GM18951 (cell line): ENCODE measurements at regions of chr5 and their contacts with region 1.

Region 1: DNA sequence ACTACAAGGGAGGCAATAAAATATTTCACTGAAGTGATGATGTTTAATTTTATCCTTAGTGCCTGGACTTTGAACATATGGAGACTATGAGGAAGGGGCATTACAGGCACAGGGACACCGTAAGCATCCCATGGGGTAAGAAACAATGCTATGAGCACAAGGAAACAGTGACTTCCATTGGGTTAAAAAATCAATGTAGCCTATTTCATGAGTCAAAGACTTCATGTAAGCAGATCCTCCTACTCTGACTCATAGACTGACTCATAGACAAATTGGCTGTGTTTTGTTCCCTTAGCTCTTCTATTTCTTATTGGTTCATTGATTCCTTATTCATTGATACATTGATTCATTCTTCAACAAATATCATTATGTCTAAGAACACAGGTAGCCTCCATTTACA is 351.0 kb downstream of the PRELID2 start:
- POLR2A ChIP-seq: no peak

Region 2: DNA sequence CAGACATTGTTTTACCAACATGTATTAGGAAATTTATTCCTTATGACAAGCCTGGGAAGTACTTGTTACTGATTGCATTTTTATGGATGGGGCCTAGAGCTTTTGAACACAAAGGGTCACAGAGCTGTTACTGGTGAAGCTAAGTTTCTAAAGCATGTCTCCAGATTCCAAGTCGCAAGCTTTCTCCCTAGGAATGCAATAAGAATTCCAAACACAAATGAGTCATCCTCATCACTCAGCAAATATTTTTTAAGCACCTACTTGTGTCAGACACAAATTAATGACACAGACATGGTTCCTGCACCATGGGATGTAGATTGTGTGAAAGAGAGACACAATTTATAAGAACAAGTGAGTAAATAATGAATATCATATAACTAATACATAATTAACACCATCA is 441.2 kb after region 1 on chr5:
- in situ Hi-C with region 1: no loop called
- POLR2A ChIP-seq: no peak

Region 3: DNA sequence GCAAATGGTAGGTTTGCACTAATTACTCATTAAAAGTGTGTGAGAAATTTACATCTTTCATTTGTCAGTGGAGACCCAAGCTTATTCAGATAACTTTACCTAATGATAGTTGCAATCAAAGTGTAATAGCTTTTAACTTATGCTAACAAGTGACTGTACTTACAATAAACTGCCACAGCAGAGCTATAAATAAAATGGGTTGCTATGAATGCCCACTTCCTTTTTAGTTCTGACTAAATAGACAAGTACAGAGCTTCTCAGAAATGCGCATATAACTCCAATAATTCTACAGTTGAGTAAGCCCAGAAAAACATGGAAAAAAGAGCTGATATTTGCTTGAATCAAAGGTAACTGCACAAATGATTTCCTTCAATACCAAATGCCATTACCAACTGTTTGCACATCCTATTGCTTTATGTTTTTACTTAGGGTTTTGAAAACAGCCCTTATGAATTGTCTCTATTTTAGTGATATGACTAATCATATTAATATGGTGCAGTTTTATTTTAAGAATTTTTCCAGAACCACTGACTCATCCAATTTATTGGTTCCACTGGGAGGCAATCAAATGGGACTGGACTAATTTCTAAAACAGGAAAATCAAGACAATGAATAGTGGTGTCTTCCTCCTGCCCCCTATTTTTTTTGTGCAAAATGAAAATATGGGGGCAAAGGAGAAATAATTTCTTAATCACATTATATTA is 1310.3 kb after region 1 on chr5:
- in situ Hi-C with region 1: loop called (anchors 10 kb)
- POLR2A ChIP-seq: no peak